MCF 10A (cell line): ENCODE measurements at regions of chr10 and their contacts with region 1.

Region 1: GRCh38 chr10:62050893-62051433 is 149.5 kb downstream of the ARID5B start:
- DNase-seq: peak; percentile 90
- H3K4me3 Mint-ChIP-seq: peak overlapping the region; percentile 84
- H3K27ac Mint-ChIP-seq: peak overlapping the region; percentile 96
- H3K4me1 Mint-ChIP-seq: peaks cover 28% of the 10 kb centered on the region
- H3K27me3 Mint-ChIP-seq: no peaks in the 10 kb centered on the region
- CTCF ChIP-seq: no peak

Region 2: DNA sequence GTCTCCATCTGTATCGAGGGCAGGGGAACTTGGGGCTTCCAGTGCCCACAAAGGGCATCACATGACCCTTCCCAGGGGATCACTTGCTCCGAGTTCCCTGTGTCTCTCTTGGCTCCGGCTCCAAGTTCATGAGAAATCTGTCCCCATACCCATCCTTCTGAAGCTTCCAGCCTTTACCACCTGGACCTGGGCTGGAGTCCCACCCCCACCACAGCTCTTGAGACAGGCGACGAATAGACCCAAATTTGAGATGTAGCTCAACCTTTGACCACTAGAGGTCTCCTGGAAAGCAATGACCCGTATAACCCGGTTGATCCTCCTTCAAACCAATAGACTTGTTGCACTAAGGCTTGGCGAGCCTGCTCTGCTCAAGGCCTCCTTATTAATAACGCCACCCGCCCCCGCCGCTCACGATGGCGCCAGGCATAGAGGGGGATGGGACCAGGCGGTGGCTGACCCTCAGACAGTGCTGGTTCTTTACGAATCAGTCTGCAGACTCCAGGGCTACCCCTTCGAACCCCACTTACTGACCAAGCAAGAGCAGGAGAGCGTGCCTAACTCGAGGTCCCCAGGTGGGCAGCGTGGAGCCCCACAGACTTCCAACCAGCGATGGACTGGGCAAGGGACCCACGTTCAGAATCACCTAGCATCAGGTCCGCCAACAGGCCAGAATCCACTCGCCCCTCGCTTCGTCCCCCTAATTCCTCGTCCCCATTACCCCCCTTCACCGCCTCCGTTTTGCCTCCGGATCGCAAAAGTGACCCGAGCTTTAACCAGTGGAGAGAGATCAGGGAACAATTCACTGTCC is 153.9 kb before region 1 on chr10:
- CTCF ChIA-PET with region 1: interaction called, 14 read pairs
- POLR2A ChIA-PET with region 1: interaction called, 98 read pairs
- intact Hi-C with region 1: no loop called
- DNase-seq: peak; percentile 80
- H3K4me3 Mint-ChIP-seq: peak overlapping the region; percentile 50
- H3K27ac Mint-ChIP-seq: no peak overlapping the region
- H3K4me1 Mint-ChIP-seq: peaks cover 33% of the 10 kb centered on the region
- H3K27me3 Mint-ChIP-seq: no peaks in the 10 kb centered on the region
- CTCF ChIP-seq: peak; percentile 50

Region 3: GRCh38 chr10:62025901-62026879 is 24.8 kb before region 1 on chr10:
- CTCF ChIA-PET with region 1: interaction called, 3 read pairs
- POLR2A ChIA-PET with region 1: interaction called, 11 read pairs
- intact Hi-C with region 1: no loop called
- DNase-seq: no peak
- H3K4me3 Mint-ChIP-seq: no peak overlapping the region
- H3K27ac Mint-ChIP-seq: peak overlapping the region; percentile 72
- H3K4me1 Mint-ChIP-seq: peaks cover 39% of the 10 kb centered on the region
- H3K27me3 Mint-ChIP-seq: no peaks in the 10 kb centered on the region
- CTCF ChIP-seq: no peak

Region 4: DNA sequence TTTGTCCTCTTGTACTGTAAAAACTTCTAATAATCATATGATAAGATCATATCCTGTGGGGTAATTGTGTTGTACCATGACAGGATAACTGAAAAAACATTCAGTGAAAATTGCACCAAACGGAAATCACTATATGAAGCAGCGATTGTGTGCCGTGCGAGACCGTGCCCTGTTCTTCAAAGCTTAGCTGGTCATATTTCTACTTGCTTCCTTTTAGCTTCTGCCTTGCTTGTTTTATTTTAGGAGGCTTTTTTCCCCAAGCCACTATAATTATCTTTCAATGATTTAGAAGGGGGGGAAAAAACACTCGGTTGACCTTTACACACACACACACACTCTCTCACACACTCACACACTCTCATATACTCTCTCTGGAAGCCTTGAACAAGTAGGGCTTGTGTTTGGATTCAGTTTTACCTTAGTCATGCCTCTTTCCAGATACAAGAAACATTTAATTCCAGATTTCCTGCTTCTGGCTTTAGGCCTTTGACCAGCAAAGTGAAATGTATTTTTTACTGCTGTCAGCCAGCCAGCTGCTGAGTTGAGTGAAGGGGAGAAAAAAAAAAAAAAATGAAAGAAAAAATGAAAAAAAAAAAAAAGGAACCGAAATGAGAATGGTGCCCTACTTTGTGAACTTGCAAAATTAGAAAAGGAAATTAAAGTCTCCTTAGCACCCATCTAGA is 31.9 kb after region 1 on chr10:
- CTCF ChIA-PET with region 1: interaction called, 3 read pairs
- POLR2A ChIA-PET with region 1: interaction called, 13 read pairs
- intact Hi-C with region 1: no loop called
- DNase-seq: no peak
- H3K4me3 Mint-ChIP-seq: peak overlapping the region; percentile 42
- H3K27ac Mint-ChIP-seq: peak overlapping the region; percentile 82
- H3K4me1 Mint-ChIP-seq: peaks cover 16% of the 10 kb centered on the region
- H3K27me3 Mint-ChIP-seq: no peaks in the 10 kb centered on the region
- CTCF ChIP-seq: no peak

Region 5: GRCh38 chr10:62095181-62096071 is 44.5 kb after region 1 on chr10:
- CTCF ChIA-PET with region 1: interaction called, 3 read pairs
- POLR2A ChIA-PET with region 1: interaction called, 34 read pairs
- intact Hi-C with region 1: no loop called
- DNase-seq: peak; percentile 81
- H3K4me3 Mint-ChIP-seq: peak overlapping the region; percentile 58
- H3K27ac Mint-ChIP-seq: peak overlapping the region; percentile 98
- H3K4me1 Mint-ChIP-seq: peaks cover 57% of the 10 kb centered on the region
- H3K27me3 Mint-ChIP-seq: no peaks in the 10 kb centered on the region
- CTCF ChIP-seq: no peak

Region 6: GRCh38 chr10:62384057-62384446 is 333.1 kb after region 1 on chr10:
- CTCF ChIA-PET with region 1: no interaction called
- POLR2A ChIA-PET with region 1: interaction called, 4 read pairs
- intact Hi-C with region 1: loop called (anchors 10 kb)
- DNase-seq: peak; percentile 76
- H3K4me3 Mint-ChIP-seq: peak overlapping the region; percentile 30
- H3K27ac Mint-ChIP-seq: peak overlapping the region; percentile 90
- H3K4me1 Mint-ChIP-seq: peaks cover 66% of the 10 kb centered on the region
- H3K27me3 Mint-ChIP-seq: no peaks in the 10 kb centered on the region
- CTCF ChIP-seq: no peak